AG04449 (cell line): ENCODE measurements at regions of chr14 and their contacts with region 1.

Region 1: DNA sequence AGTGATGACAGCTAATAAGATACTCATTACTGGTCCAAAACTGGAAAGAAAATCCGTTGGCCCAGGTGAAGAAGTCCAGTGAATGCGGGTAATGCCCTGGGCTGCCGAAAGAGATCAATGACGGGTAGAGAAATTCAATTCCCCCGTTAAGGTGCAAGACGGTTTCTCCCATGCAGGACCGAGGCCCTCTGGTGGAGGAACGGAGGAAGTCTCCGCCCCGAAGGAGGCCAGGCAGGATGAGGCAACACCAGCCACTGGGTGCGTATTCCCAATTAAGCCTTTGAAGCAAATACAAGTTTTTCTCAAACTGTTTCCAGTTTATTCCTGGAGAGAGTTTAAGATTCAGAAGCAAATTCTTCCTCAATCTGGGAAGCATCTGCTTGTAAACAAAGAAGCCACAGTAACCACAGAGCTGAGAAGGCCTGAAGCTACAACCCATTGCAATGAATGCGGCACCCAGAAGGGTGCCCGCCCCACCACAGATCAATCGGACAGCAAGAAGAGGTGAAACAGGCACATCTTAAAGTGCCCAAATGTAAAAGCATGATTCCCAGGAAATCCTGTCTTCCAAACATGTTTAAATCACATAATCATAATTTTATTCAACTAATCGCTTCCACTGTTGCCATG is 118.5 kb downstream of the TTC7B start:
- DNase-seq: no peak
- H3K4me3 ChIP-seq: no peak overlapping the region
- CTCF ChIP-seq: peak; percentile 95

Region 2: GRCh38 chr14:90288651-90289355 is 408.9 kb before region 1 on chr14:
- CTCF ChIA-PET with region 1: interaction called, 34 read pairs
- POLR2A ChIA-PET with region 1: no interaction called
- DNase-seq: no peak
- H3K4me3 ChIP-seq: no peak overlapping the region
- CTCF ChIP-seq: no peak

Region 3: DNA sequence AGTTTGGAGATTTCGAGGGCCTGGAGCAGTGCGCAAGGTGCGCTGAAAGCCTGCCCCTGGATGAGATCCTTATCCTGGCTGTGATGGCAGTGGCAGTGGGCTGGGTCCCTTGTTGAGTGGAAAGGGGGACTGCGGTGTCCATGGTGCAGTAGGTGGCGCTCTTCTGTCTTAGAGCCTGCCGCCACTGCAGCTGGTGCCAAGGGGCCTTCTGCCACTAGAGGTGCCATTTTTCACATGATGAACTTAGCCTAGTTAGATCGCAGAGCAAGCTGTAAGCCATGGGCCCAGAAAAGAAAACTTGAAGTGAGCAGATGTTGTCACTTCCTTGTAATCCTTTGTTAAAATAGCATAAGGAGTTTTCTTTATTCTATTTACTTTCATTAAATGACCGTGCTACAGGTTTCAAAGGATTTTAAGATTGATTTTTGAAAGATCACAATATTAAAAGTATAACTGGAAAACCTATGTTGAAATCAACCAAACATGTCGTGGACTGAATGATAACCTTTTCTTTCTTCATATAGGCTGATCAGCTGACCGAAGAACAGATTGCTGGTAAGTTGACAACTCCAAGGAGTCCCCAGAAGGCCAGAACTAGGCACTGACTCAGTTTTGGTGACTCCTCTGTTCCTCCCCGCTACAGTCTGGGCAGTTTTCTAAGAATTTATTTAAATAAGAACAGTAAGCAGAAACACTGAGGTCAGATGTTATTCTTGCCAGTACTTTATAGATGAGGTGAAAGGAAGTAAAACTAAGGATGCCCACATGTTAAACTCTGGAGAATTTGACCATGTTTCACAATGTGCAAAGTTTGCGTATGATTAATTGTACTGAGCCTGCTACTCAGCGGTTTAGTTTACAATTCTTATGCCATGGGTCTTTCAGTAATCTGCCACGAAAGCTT is 297.9 kb before region 1 on chr14:
- CTCF ChIA-PET with region 1: interaction called, 107 read pairs
- POLR2A ChIA-PET with region 1: interaction called, 7 read pairs
- DNase-seq: no peak
- H3K4me3 ChIP-seq: peak overlapping the region; percentile 97
- CTCF ChIP-seq: peak; percentile 100

Region 4: GRCh38 chr14:90583427-90583826 is 114.3 kb before region 1 on chr14:
- CTCF ChIA-PET with region 1: no interaction called
- POLR2A ChIA-PET with region 1: no interaction called
- DNase-seq: no peak
- H3K4me3 ChIP-seq: no peak overlapping the region
- CTCF ChIP-seq: no peak

Region 5: DNA sequence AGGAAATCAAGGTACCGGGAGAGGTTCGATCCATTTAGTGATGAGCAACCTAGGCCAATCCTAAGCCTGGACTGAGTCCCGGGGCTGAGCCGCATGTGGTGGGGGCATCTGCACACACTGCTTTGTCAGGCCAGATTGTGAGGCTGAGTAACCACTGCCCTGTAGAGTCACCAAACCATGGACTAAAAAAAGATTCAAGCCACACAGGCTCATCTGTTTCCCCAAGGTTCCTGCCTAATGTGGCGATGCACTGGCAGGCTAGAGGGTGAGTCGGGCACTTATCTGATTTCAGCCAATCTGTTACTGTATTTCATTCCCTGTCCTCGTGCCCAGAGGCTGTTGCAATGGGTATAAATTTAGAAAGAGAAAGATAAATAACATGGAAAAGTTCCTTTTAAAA is 22.3 kb before region 1 on chr14:
- CTCF ChIA-PET with region 1: interaction called, 15 read pairs
- POLR2A ChIA-PET with region 1: no interaction called
- DNase-seq: peak; percentile 29
- H3K4me3 ChIP-seq: no peak overlapping the region
- CTCF ChIP-seq: no peak

Region 6: DNA sequence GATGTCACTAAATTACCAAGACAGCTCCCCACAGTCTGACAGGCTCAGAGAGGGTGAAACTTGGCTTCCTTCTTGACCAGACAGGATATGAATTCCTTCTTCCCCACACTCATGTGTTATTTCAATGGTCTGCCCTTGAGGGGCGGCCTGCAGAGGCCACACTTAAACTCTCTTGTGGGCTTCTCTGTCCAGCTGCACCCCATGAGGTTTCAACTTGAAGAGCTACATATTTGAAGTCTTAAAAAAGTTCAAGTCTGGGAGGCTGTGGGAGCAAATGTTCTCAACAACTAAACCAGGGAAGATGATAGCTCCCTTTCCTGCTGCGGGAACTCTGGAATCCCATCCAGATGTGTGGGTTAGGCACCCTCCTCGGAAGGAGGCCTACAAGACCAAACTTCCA is 20.2 kb after region 1 on chr14:
- CTCF ChIA-PET with region 1: interaction called, 36 read pairs
- POLR2A ChIA-PET with region 1: no interaction called
- DNase-seq: no peak
- H3K4me3 ChIP-seq: no peak overlapping the region
- CTCF ChIP-seq: no peak